ENCODE measurements at regions of chr13 and their contacts with region 1.

Region 1: GRCh38 chr13:101492251-101492910 is 39.9 kb downstream of the ITGBL1 start:
- DNase-seq: peak; percentile 83
- H3K4me3 ChIP-seq: no peak overlapping the region
- H3K27ac ChIP-seq: peak overlapping the region; percentile 20
- H3K4me1 ChIP-seq: peaks cover 41% of the 10 kb centered on the region
- H3K27me3 ChIP-seq: no peaks in the 10 kb centered on the region
- CTCF ChIP-seq: no peak
- POLR2A ChIP-seq: no peak

Region 2: GRCh38 chr13:100887729-100888156 is 604.6 kb before region 1 on chr13:
- CTCF ChIA-PET with region 1: no interaction called
- POLR2A ChIA-PET with region 1: no interaction called
- dilution Hi-C with region 1: no loop called
- intact Hi-C with region 1: loop called (anchors 1 kb)
- DNase-seq: peak; percentile 86
- H3K4me3 ChIP-seq: no peak overlapping the region
- H3K27ac ChIP-seq: peak overlapping the region; percentile 71
- H3K4me1 ChIP-seq: peaks cover 8% of the 10 kb centered on the region
- H3K27me3 ChIP-seq: no peaks in the 10 kb centered on the region
- CTCF ChIP-seq: no peak
- POLR2A ChIP-seq: no peak

Region 3: DNA sequence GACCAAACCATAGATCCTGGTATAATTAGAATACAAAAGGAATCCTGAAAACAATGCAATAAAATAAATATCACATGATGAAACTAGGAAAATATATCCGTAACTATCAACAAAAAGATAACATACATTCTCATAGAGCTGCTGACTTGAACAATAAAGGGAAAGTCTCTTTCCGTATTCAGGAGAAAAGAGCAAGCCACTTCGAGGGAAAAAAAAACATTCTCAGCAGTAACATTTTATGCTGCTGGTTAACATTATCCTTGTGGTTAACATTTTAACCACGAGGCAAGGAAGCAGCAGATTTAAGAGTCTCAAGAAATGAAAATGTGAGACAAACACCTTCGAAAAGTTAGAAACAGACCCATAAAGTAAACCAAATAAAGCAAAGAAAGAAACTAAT is 101.9 kb before region 1 on chr13:
- CTCF ChIA-PET with region 1: no interaction called
- POLR2A ChIA-PET with region 1: no interaction called
- dilution Hi-C with region 1: no loop called
- intact Hi-C with region 1: loop called (anchors 1 kb)
- DNase-seq: peak; percentile 81
- H3K4me3 ChIP-seq: peak overlapping the region in 1 of 3 experiments; percentile 1
- H3K27ac ChIP-seq: peak overlapping the region; percentile 68
- H3K4me1 ChIP-seq: peaks cover 10% of the 10 kb centered on the region
- H3K27me3 ChIP-seq: no peaks in the 10 kb centered on the region
- CTCF ChIP-seq: no peak
- POLR2A ChIP-seq: no peak

Region 4: GRCh38 chr13:101474419-101474957 is 17.9 kb before region 1 on chr13:
- CTCF ChIA-PET with region 1: interaction called, 13 read pairs
- POLR2A ChIA-PET with region 1: no interaction called
- dilution Hi-C with region 1: no loop called
- intact Hi-C with region 1: no loop called
- DNase-seq: peak; percentile 80
- H3K4me3 ChIP-seq: no peak overlapping the region
- H3K27ac ChIP-seq: no peak overlapping the region
- H3K4me1 ChIP-seq: peaks cover 9% of the 10 kb centered on the region
- H3K27me3 ChIP-seq: no peaks in the 10 kb centered on the region
- CTCF ChIP-seq: peak; percentile 40 to 44
- POLR2A ChIP-seq: no peak

Region 5: DNA sequence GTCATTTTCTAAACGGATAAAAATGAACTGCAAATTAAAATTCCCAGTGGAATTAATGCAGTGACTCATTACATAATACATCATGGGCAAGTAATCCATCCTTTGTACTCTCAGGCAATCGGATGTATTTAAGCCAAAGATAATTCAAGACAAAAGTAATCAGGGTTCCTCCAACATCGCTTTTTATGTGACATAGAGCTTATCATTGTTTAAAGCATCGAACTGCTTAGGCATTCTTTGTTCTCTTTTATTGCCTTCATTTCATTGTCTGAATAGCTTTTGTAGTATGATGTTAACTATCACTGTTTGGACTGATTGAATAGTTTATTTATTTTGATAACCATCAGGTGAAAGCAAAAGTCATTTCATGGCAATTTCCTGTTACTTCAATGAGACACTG is 169.5 kb after region 1 on chr13:
- CTCF ChIA-PET with region 1: no interaction called
- POLR2A ChIA-PET with region 1: no interaction called
- dilution Hi-C with region 1: no loop called
- intact Hi-C with region 1: loop called (anchors 1 kb)
- DNase-seq: peak; percentile 84
- H3K4me3 ChIP-seq: no peak overlapping the region
- H3K27ac ChIP-seq: peak overlapping the region; percentile 32
- H3K4me1 ChIP-seq: peaks cover 23% of the 10 kb centered on the region
- H3K27me3 ChIP-seq: no peaks in the 10 kb centered on the region
- CTCF ChIP-seq: no peak
- POLR2A ChIP-seq: no peak

Region 6: DNA sequence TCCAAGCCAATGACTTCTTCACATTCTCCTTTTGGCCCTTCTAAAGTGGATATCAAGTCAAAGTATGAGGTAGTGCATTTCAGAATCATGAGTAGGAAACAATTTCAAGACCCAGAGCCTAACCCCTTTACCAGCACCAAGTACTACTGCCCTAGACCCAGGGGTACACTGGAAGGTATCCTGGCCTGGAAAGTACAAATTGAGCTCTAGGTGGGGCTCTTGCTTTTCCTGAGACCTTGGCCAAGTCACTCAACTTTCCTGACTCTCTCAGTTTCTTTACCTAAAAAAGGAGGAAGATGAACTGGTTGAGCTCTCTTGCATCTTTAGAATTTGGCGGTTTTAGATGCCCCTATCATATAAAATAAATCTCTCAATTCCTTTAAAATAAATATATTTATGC is 704.8 kb after region 1 on chr13:
- CTCF ChIA-PET with region 1: no interaction called
- POLR2A ChIA-PET with region 1: no interaction called
- dilution Hi-C with region 1: no loop called
- intact Hi-C with region 1: loop called (anchors 10 kb)
- DNase-seq: no peak
- H3K4me3 ChIP-seq: no peak overlapping the region
- H3K27ac ChIP-seq: no peak overlapping the region
- H3K4me1 ChIP-seq: peaks cover 30% of the 10 kb centered on the region
- H3K27me3 ChIP-seq: no peaks in the 10 kb centered on the region
- CTCF ChIP-seq: no peak
- POLR2A ChIP-seq: no peak